ENCODE measurements at regions of chr7 and their contacts with region 1.

Region 1: GRCh38 chr7:39623018-39623731 is at the start of gene RALA:
- DNase-seq: peak; percentile 90 to 95 (median 92)
- ATAC-seq: peak; percentile 92
- H3K4me3 ChIP-seq: peak within 1 kb of the TSS; percentile 88
- H3K27ac ChIP-seq: peak within 1 kb of the TSS; percentile 79
- H3K4me1 ChIP-seq: peaks cover 24 to 45% of the 10 kb centered on the region in 2 experiments
- H3K27me3 ChIP-seq: no peaks in the 10 kb centered on the region
- CTCF ChIP-seq: no peak
- EP300 ChIP-seq: 0 out of 2 replicates have a peak, but pooled peaks have one; percentile 24
- POLR2A ChIP-seq: peak; percentile 91
- RAD21 ChIP-seq: no peak
- polyA plus RNA-seq, gene RALA: 7.2 to 9.7 TPM

Region 2: GRCh38 chr7:39446546-39446945 is 176.6 kb before region 1 on chr7:
- CTCF ChIA-PET with region 1: no interaction called
- POLR2A ChIA-PET with region 1: no interaction called
- in situ Hi-C with region 1: no loop called
- intact Hi-C with region 1: no loop called
- DNase-seq: no peak
- ATAC-seq: no peak
- H3K4me3 ChIP-seq: no peak overlapping the region
- H3K27ac ChIP-seq: no peak overlapping the region
- H3K4me1 ChIP-seq: no peaks in the 10 kb centered on the region
- H3K27me3 ChIP-seq: peaks cover 7 to 22% of the 10 kb centered on the region in 2 experiments; a peak in 3 of 5 replicates
- CTCF ChIP-seq: no peak
- EP300 ChIP-seq: no peak
- POLR2A ChIP-seq: no peak
- RAD21 ChIP-seq: no peak

Region 3: GRCh38 chr7:39589323-39590111 is 33.7 kb before region 1 on chr7:
- CTCF ChIA-PET with region 1: no interaction called
- POLR2A ChIA-PET with region 1: no interaction called
- in situ Hi-C with region 1: no loop called
- intact Hi-C with region 1: loop called (anchors 1 kb)
- DNase-seq: peak; percentile 56 to 92 (median 70)
- ATAC-seq: peak; percentile 92
- H3K4me3 ChIP-seq: no peak overlapping the region
- H3K27ac ChIP-seq: peak overlapping the region; percentile 45; the same call in 1 of the 3 replicates
- H3K4me1 ChIP-seq: peaks cover 4 to 15% of the 10 kb centered on the region in 2 experiments
- H3K27me3 ChIP-seq: no peaks in the 10 kb centered on the region
- CTCF ChIP-seq: peak in 1 of 3 experiments; percentile 8; a peak in 1 of 6 replicates
- EP300 ChIP-seq: peak; percentile 89
- POLR2A ChIP-seq: no peak
- RAD21 ChIP-seq: peak; percentile 19 to 37; a peak in 2 of 4 replicates

Region 4: GRCh38 chr7:39609113-39609934 is 13.9 kb before region 1 on chr7:
- CTCF ChIA-PET with region 1: interaction called, 3 read pairs
- POLR2A ChIA-PET with region 1: interaction called, 22 read pairs
- in situ Hi-C with region 1: no loop called
- intact Hi-C with region 1: no loop called
- DNase-seq: peak in 1 of 4 experiments; percentile 25
- ATAC-seq: peak; percentile 70
- H3K4me3 ChIP-seq: no peak overlapping the region
- H3K27ac ChIP-seq: no peak overlapping the region
- H3K4me1 ChIP-seq: peaks cover 4 to 6% of the 10 kb centered on the region in 2 experiments; a peak in 3 of 5 replicates
- H3K27me3 ChIP-seq: no peaks in the 10 kb centered on the region
- CTCF ChIP-seq: no peak
- EP300 ChIP-seq: no peak
- POLR2A ChIP-seq: no peak
- RAD21 ChIP-seq: no peak

Region 5: GRCh38 chr7:39746103-39746819 is 123.1 kb after region 1 on chr7:
- CTCF ChIA-PET with region 1: no interaction called
- POLR2A ChIA-PET with region 1: interaction called, 3 read pairs
- in situ Hi-C with region 1: no loop called
- intact Hi-C with region 1: loop called (anchors 5 kb)
- DNase-seq: peak; percentile 52 to 77 (median 66)
- ATAC-seq: peak; percentile 85
- H3K4me3 ChIP-seq: no peak overlapping the region
- H3K27ac ChIP-seq: no peak overlapping the region
- H3K4me1 ChIP-seq: no peaks in the 10 kb centered on the region
- H3K27me3 ChIP-seq: peaks cover 0 to 4% of the 10 kb centered on the region in 2 experiments; a peak in 1 of 5 replicates
- CTCF ChIP-seq: peak; percentile 76 to 91 (median 83)
- EP300 ChIP-seq: no peak
- POLR2A ChIP-seq: no peak
- RAD21 ChIP-seq: peak; percentile 87 to 91

Region 6: DNA sequence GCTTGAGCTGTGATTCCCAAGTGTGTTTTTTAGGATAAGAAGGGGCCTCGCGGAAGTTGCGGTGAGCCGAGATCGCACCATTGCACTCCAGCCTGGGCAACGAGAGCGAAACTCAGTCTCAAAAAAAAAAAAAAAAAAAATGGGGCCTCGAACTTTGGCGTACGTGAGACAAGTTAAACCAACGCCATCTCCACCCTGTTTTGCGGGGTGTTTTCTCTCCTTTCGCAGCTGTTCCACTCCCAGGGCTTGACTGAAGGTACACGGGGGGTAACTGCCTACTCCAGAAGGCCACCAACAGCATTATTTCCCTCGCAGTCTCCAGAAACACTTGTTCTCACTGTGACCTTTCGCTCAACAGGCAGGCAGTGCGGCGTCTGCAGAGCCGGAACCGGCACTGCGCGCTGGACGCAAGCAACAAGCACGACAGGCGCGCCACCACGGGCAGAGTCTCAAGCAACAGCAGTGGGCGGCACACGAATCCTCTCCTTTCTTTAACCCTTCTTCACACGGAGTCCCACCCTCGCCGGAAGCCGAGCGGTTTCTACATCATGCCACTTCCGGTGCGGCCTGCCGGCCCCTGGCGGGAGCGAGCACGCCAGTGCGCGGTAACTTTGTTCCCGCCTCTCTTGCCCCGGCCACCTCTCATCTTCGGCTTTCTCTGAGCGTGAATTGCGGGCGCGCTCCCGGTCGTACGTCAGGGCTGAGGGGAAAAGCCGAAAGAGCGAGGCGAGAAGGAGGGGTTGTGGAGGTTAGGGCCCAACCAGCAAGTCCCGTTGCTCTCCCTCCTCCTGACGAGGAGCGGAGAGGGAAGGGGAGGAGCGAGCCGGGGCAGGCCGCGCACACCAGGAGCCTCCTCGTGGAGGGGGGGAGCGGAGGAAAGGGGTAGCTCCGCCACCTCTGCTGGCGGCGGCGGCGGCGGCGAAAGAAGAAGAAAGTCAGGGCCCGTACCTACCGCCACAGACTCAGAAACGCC is 326.1 kb after region 1 on chr7:
- CTCF ChIA-PET with region 1: no interaction called
- POLR2A ChIA-PET with region 1: no interaction called
- in situ Hi-C with region 1: no loop called
- intact Hi-C with region 1: loop called (anchors 5 kb)
- DNase-seq: peak; percentile 88 to 98 (median 91)
- ATAC-seq: peak; percentile 84
- H3K4me3 ChIP-seq: peak overlapping the region; percentile 72
- H3K27ac ChIP-seq: peak overlapping the region; percentile 96
- H3K4me1 ChIP-seq: peaks cover 9 to 24% of the 10 kb centered on the region in 2 experiments
- H3K27me3 ChIP-seq: no peaks in the 10 kb centered on the region
- CTCF ChIP-seq: 0 out of 6 replicates have a peak, but pooled peaks of 1 of the 3 experiments have one; percentile 8
- EP300 ChIP-seq: peak; percentile 11; the same call in 1 of the 2 replicates
- POLR2A ChIP-seq: peak; percentile 97
- RAD21 ChIP-seq: no peak